ENCODE measurements at regions of chr12 and their contacts with region 1.

Region 1: DNA sequence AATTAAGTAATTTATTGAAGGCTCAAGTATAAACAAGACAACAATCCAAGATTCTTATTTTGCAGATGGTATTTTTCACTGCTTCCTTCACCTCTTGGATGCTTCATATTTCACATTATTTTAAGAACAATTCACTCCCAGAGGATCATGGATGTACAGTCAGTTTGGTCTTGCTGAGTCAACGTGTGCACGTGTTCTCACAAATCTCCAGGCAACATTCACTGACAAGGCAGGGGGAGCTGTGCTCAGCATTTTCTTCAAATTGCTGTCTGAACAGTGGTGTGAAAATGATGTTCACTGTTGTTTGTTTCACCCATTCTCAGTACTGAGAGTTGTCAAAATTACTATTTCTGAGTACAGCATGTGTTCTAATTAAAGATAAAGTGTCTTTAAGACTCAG is 118.3 kb upstream of the SLC38A4 start:
- DNase-seq: peak in 1 of 2 experiments; percentile 71
- ATAC-seq: peak; percentile 74 to 75
- H3K4me3 ChIP-seq: no peak overlapping the region
- H3K27ac ChIP-seq: no peak overlapping the region
- H3K4me1 ChIP-seq: 0 out of 3 replicates have a peak, but pooled peaks cover 6% of the 10 kb centered on the region
- CTCF ChIP-seq: no peak
- EP300 ChIP-seq: no peak
- POLR2A ChIP-seq: no peak
- RAD21 ChIP-seq: peak in 1 of 2 experiments; percentile 30; a peak in 2 of 5 replicates

Region 2: GRCh38 chr12:46855760-46856159 is 88.3 kb before region 1 on chr12:
- CTCF ChIA-PET with region 1: no interaction called
- POLR2A ChIA-PET with region 1: no interaction called
- DNase-seq: no peak
- ATAC-seq: no peak
- H3K4me3 ChIP-seq: no peak overlapping the region
- H3K27ac ChIP-seq: no peak overlapping the region
- H3K4me1 ChIP-seq: no peaks in the 10 kb centered on the region
- CTCF ChIP-seq: no peak
- EP300 ChIP-seq: no peak
- POLR2A ChIP-seq: no peak
- RAD21 ChIP-seq: no peak

Region 3: DNA sequence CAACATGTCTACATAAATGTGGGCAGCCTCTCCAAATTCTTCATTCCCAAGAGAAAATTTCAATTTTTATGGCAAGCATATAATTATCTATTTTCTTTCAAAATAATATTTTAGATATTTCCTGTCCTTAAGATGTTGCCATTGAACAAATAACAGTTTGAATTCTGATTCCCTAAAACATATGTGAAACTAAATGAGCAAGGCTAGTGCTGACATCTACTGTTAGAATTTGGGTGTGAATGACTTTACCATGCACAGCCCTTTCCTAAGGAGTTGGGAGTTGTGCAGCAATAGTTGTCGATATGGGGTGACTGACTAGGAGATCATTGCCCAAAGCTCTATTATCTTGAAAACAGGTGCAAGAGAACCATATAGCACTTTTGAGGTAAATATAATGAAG is 10.1 kb before region 1 on chr12:
- CTCF ChIA-PET with region 1: interaction called, 19 read pairs
- POLR2A ChIA-PET with region 1: no interaction called
- DNase-seq: peak; percentile 22 to 58
- ATAC-seq: peak; percentile 76 to 88; a peak in 5 of 6 replicates
- H3K4me3 ChIP-seq: no peak overlapping the region
- H3K27ac ChIP-seq: no peak overlapping the region
- H3K4me1 ChIP-seq: peaks cover 9% of the 10 kb centered on the region; the same call in 2 of the 3 replicates
- CTCF ChIP-seq: peak; percentile 74
- EP300 ChIP-seq: no peak
- POLR2A ChIP-seq: no peak
- RAD21 ChIP-seq: peak; percentile 85 to 89